Lower leg skin (tissue), 4 donors: ENCODE measurements at regions of chr4 and their contacts with region 1.

Region 1: GRCh38 chr4:151573945-151574344 is 165.0 kb downstream of the FHIP1A start:
- DNase-seq: peak in 1 of 2 donors; percentile 45
- H3K4me3 ChIP-seq: no peak overlapping the region
- CTCF ChIP-seq: no peak
- POLR2A ChIP-seq: no peak

Region 2: DNA sequence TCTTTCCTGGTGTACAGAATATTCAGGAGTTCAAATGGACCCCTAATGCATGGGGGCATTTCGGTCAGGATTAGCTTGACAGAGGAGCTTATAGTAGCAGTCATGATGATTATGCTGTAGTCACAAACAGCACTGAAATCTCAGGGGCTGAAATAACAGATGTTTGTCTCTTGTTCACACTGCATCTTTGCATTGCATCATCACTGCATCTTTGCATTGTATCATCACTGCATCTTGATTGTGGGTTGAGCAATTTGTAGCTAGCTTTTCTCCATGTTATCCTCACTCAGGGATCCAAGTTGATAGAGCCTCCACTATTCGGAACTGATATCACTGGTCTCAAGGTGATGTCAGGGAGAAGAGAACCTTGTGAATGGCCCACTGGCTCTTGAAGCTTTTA is 25.9 kb after region 1 on chr4:
- intact Hi-C with region 1: loop called (anchors 2 kb)
- DNase-seq: no peak
- H3K4me3 ChIP-seq: no peak overlapping the region
- CTCF ChIP-seq: no peak
- POLR2A ChIP-seq: no peak